Activated CD8-positive, alpha-beta T cell treated with anti-CD3 and anti-CD28 coated beads for 36 hours (primary cell): ENCODE measurements at regions of chr19 and their contacts with region 1.

Region 1: GRCh38 chr19:1113033-1113985 is 9.5 kb downstream of the GPX4 start:
- DNase-seq: peak; percentile 95
- ATAC-seq: peak; percentile 96
- H3K4me3 Mint-ChIP-seq: no peak overlapping the region
- H3K27ac Mint-ChIP-seq: no peak overlapping the region
- H3K4me1 Mint-ChIP-seq: peaks cover 5% of the 10 kb centered on the region
- H3K27me3 Mint-ChIP-seq: no peaks in the 10 kb centered on the region
- CTCF ChIP-seq: peak; percentile 95

Region 2: DNA sequence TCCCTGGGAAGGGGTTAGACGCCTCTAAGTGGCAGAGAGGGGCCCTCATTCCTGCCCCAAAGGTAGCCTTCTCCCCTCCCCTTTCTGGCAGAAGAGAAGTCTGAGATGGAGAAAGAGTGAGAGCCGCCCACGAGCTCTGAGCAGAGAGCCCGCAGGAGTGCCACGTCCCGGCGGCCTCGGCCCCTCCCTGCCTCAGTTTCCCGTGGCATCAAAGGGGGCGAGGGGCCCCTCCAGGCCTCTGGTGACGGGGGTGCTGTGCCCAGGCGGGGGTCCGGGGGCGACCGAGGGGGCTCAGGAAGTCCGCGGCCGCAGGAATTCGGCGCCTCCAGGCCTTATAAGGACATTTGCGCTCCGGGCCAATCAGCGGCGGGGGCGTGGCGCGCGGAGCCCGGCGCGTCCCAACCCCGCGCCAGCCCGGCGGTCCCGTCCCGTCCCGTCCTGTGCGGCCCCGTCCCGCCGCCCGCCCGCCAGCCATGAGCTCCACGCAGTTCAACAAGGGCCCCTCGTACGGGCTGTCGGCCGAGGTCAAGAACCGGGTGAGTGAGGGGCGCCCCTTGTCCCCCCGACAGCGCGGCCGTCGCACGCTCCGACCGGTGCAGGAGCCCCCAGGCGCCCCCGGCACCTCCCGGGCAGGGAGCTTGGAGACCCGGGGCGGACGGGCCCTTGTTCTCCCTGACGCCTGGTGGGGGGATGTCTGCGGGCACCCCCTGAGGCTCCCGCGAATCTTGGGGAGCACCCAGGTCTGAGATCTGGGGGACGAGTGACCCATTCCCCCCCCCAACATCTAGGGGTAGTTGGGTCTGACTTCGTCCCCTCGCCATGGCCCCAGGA is 86.9 kb before region 1 on chr19 and contains the start of gene CNN2:
- CTCF ChIA-PET with region 1: no interaction called
- POLR2A ChIA-PET with region 1: no interaction called
- intact Hi-C with region 1: no loop called
- DNase-seq: peak; percentile 79
- ATAC-seq: peak; percentile 47
- H3K4me3 Mint-ChIP-seq: peak within 1 kb of the TSS; percentile 89
- H3K27ac Mint-ChIP-seq: peak within 1 kb of the TSS; percentile 90
- H3K4me1 Mint-ChIP-seq: peaks cover 31% of the 10 kb centered on the region
- H3K27me3 Mint-ChIP-seq: no peaks in the 10 kb centered on the region
- CTCF ChIP-seq: no peak
- total RNA-seq, gene CNN2: 97.4 to 98.3 TPM

Region 3: DNA sequence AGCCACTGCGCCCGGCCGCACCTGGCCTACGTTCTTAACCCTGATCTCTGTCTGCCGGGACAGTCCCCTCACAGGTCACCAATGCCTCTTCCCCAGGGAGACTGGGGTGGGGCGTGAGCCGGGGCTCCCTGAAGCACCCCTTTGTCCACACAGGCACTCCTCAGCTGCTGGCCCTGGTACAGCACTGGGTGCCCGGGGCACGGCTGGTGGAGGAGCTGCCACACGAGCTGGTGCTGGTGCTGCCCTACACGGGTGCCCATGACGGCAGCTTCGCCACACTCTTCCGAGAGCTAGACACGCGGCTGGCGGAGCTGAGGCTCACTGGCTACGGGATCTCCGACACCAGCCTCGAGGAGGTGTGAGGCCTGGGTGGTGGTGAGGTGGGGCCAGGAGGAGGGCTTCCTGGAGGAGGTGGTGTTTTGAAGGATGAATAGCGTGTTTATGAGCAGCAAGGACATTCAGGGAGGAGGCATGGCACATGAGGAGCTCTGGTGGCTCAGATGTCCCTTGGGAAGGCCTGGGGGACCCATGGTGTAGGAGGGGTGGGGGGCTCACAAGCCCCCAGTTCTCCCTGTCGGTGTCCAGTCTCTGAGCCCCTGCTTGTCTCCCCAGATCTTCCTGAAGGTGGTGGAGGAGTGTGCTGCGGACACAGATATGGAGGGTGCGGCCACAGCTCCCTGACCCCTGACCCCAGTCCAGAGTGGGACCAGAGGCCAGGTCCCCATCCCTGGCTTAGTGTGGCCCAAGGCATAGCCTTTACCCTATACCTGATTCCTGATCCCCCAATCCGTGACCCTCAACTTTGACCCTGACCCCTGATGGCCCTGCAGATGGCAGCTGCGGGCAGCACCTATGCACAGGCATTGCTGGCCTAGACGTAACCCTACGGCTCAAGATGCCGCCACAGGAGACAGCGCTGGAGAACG is 59.9 kb before region 1 on chr19:
- CTCF ChIA-PET with region 1: no interaction called
- POLR2A ChIA-PET with region 1: no interaction called
- intact Hi-C with region 1: no loop called
- DNase-seq: no peak
- ATAC-seq: no peak
- H3K4me3 Mint-ChIP-seq: no peak overlapping the region
- H3K27ac Mint-ChIP-seq: no peak overlapping the region
- H3K4me1 Mint-ChIP-seq: peaks cover 19% of the 10 kb centered on the region
- H3K27me3 Mint-ChIP-seq: no peaks in the 10 kb centered on the region
- CTCF ChIP-seq: no peak

Region 4: GRCh38 chr19:1064661-1065605 is 48.4 kb before region 1 on chr19:
- CTCF ChIA-PET with region 1: no interaction called
- POLR2A ChIA-PET with region 1: no interaction called
- intact Hi-C with region 1: no loop called
- DNase-seq: peak; percentile 76
- ATAC-seq: peak; percentile 25
- H3K4me3 Mint-ChIP-seq: peak overlapping the region; percentile 9
- H3K27ac Mint-ChIP-seq: no peak overlapping the region
- H3K4me1 Mint-ChIP-seq: peaks cover 32% of the 10 kb centered on the region
- H3K27me3 Mint-ChIP-seq: no peaks in the 10 kb centered on the region
- CTCF ChIP-seq: peak; percentile 83

Region 5: GRCh38 chr19:1189419-1189818 is 76.1 kb after region 1 on chr19:
- CTCF ChIA-PET with region 1: interaction called, 37 read pairs
- POLR2A ChIA-PET with region 1: interaction called, 19 read pairs
- intact Hi-C with region 1: loop called (anchors 5 kb)
- DNase-seq: peak; percentile 76
- ATAC-seq: peak; percentile 85
- H3K4me3 Mint-ChIP-seq: no peak overlapping the region
- H3K27ac Mint-ChIP-seq: peak overlapping the region; percentile 80
- H3K4me1 Mint-ChIP-seq: peaks cover 27% of the 10 kb centered on the region
- H3K27me3 Mint-ChIP-seq: no peaks in the 10 kb centered on the region
- CTCF ChIP-seq: no peak

Region 6: GRCh38 chr19:1205114-1206062 is 92.1 kb after region 1 on chr19 and contains the start of gene STK11:
- CTCF ChIA-PET with region 1: interaction called, 14 read pairs
- POLR2A ChIA-PET with region 1: no interaction called
- intact Hi-C with region 1: no loop called
- DNase-seq: peak; percentile 99
- ATAC-seq: peak; percentile 97
- H3K4me3 Mint-ChIP-seq: peak within 1 kb of the TSS; percentile 97
- H3K27ac Mint-ChIP-seq: peak within 1 kb of the TSS; percentile 79
- H3K4me1 Mint-ChIP-seq: peaks cover 18% of the 10 kb centered on the region
- H3K27me3 Mint-ChIP-seq: no peaks in the 10 kb centered on the region
- CTCF ChIP-seq: no peak
- total RNA-seq, gene STK11: 55.1 to 58.0 TPM